ENCODE measurements at regions of chr10 and their contacts with region 1.

Region 1: GRCh38 chr10:101467286-101467770 is 113.4 kb downstream of the BTRC start:
- DNase-seq: peak; percentile 36
- H3K4me3 Mint-ChIP-seq: no peak overlapping the region
- H3K27ac Mint-ChIP-seq: no peak overlapping the region
- H3K4me1 Mint-ChIP-seq: peaks cover 5% of the 10 kb centered on the region
- H3K27me3 Mint-ChIP-seq: no peaks in the 10 kb centered on the region

Region 2: DNA sequence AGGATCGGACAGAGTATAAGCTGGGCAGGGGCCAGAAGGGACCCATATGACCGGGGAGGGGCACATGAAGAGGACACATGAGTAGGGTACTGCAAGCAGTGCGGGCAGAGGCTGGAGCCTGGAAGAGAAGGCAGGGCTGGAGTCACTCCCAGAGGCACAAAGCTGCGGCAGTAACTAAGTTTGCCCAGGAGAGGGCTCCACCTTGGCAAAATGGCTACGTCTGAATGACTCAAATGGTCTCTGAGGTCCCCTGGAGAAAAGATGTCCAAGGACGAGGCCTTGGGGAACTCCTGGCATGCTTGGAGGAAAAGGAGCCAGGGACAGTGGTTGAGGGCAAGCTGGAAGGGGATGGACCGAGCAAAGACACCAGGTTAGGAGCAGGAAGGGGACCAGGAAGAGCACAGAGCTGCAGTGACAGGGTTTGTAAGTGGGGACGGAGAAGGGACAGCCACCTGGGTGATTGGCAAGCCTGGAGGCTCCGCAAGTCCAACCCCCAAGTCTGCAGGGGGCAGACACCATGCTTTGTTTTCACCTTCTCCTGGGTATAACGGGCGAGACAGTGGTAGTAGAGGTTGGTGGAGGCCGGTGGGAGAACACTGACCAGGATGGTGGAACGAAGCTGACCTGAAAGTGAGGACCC is 195.0 kb before region 1 on chr10:
- CTCF ChIA-PET with region 1: interaction called, 10 read pairs
- intact Hi-C with region 1: no loop called
- DNase-seq: peak; percentile 73
- H3K4me3 Mint-ChIP-seq: no peak overlapping the region
- H3K27ac Mint-ChIP-seq: no peak overlapping the region
- H3K4me1 Mint-ChIP-seq: peaks cover 2% of the 10 kb centered on the region
- H3K27me3 Mint-ChIP-seq: peaks cover 20% of the 10 kb centered on the region

Region 3: DNA sequence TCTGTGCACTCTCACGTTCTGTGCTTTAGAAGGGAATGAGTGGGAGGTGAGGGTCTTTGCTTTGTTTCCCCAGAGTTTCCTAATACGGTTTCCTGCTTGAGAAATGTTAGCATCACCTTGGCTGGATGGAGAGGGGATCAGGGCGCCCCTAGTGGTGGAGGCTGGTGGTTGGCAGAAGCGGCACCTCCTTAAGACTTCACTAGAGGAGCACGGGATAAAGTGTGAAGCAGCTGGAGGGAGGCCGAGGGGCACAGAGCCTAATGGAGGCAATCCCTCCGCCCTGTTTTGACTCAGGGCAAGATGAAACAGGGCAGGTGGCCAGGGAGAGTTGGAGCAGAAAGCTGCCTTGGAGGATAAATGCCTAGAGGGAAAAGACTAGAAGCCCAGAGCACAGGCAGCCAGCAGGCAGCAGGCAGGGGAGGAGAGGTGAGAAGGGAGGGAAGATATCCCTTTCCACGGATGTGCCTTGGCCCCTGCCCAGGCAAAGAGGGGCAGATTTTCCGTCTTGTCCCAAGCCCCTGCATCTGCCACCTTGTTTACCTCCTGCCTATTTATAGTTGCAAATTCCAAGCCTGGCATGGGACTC is 169.3 kb before region 1 on chr10:
- CTCF ChIA-PET with region 1: interaction called, 13 read pairs
- intact Hi-C with region 1: loop called (anchors 2 kb)
- DNase-seq: peak; percentile 89
- H3K4me3 Mint-ChIP-seq: no peak overlapping the region
- H3K27ac Mint-ChIP-seq: no peak overlapping the region
- H3K4me1 Mint-ChIP-seq: peaks cover 1% of the 10 kb centered on the region
- H3K27me3 Mint-ChIP-seq: peaks cover 35% of the 10 kb centered on the region

Region 4: DNA sequence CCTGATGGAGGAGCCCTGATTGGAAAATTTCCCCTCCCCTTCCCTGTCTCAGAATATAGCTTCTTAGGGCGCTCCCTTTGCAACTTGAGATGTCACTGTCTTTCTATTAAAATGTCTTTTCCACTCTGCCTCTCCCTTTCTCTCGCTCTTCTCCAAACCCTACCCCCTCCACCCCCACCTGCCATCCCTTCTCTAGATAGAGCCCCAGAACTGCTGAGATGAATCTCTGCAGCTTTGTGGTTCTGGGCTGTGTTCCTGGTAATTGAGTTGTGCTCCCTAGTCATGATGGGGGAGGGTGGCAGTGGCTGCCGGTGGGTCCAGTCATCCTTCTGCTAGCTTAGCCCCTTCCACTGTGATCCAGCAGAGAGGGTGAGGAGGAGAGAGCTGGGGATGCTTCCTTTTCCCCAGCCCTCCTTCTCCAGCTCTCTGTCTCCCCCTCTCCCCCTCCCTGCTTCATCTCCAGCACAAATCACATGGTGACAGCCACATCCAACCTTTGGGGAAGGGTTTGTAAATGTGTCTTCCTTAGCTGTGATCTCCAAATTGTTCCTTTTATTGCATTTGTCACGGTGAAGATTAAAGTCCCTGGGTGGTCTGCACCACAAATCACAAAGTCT is 164.1 kb before region 1 on chr10:
- CTCF ChIA-PET with region 1: interaction called, 13 read pairs
- intact Hi-C with region 1: loop called (anchors 2 kb)
- DNase-seq: no peak
- H3K4me3 Mint-ChIP-seq: no peak overlapping the region
- H3K27ac Mint-ChIP-seq: no peak overlapping the region
- H3K4me1 Mint-ChIP-seq: no peaks in the 10 kb centered on the region
- H3K27me3 Mint-ChIP-seq: peaks cover 23% of the 10 kb centered on the region

Region 5: DNA sequence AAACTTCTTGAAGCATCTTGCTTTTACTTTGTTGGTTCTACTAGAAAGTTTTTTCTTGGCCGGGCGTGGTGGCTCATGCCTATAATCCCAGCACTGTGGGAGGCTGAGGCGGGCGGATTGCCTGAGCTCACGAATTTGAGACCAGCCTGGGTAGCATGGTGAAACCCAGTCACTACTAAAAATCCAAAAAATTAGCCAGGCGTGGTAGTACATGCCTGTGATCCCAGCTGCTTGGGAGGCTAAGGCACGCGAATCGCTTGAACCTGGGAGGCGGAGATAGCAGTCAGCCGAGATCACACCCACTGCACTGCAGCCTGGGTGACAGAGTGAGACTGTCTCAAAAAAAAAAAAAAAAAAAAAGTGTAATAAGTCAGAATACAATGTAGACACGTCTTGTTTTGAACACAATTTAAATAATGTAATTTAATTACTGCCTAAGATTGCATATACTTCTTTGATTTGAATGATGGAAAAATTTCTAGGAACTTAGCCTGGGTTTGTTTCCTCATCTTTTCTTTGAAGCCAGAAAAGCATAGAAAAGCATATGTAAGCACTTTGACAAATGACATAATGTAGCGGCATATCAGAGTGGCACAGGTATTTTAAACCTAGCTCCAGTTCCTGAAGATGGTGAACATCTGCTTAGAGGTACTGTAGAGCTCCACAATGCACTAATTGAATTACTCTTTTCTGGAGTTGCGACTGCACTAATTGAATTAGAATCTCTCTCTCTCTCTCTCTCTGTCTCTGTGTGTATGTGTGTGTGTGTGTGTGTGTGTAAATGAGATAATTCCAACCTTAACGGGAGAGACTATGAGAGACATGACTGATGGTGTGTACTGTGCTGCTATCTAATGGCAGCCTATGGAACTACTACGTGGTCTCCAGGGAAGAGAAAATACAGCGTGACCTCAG is 25.5 kb before region 1 on chr10:
- CTCF ChIA-PET with region 1: interaction called, 17 read pairs
- intact Hi-C with region 1: no loop called
- DNase-seq: peak; percentile 48
- H3K4me3 Mint-ChIP-seq: no peak overlapping the region
- H3K27ac Mint-ChIP-seq: no peak overlapping the region
- H3K4me1 Mint-ChIP-seq: peaks cover 2% of the 10 kb centered on the region
- H3K27me3 Mint-ChIP-seq: no peaks in the 10 kb centered on the region

Region 6: DNA sequence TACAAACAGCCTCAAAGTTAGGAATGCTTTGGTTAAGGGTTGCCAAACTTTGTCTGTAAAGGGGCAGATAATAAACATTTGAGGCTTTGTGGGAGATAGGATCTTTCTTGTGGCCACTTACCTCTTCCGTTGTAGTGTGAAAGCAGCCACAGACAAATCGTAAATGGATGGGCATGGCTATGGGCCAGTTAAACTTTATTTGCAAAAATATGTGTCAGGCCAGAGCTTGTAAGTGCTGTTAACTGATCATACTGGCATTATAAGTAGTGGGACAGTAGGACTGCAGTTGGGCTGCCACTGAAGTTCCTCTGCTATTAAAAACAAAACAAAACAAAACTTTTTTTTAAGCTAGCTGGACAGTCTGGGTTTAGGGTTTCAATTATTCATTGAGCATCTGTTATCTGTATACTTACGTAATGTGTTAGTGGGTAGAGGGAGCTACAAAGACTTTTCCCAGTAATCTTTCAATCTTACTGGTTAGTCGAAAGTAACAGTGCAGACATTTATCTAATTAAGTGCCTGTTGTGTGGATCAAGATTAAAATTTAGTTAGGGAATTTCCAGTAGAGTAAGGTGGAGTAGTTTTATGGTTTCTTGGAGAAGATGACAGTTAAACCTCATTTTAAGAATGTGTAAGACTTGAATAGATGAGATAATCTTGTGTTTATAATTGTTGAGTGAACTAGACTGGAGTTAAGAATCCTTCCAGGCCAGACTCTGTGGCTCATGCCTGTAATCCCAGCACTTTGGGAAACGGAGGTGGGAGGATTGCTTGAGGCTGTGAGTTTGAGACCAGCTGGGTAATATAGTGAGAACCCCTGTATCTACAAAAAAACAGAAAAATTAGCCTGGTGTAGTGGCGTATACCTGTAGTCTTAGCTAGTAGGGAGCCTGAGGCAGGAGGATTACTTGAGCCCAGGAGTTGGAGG is 13.3 kb before region 1 on chr10:
- CTCF ChIA-PET with region 1: interaction called, 17 read pairs
- intact Hi-C with region 1: no loop called
- DNase-seq: no peak
- H3K4me3 Mint-ChIP-seq: no peak overlapping the region
- H3K27ac Mint-ChIP-seq: no peak overlapping the region
- H3K4me1 Mint-ChIP-seq: peaks cover 22% of the 10 kb centered on the region
- H3K27me3 Mint-ChIP-seq: no peaks in the 10 kb centered on the region

Region 7: DNA sequence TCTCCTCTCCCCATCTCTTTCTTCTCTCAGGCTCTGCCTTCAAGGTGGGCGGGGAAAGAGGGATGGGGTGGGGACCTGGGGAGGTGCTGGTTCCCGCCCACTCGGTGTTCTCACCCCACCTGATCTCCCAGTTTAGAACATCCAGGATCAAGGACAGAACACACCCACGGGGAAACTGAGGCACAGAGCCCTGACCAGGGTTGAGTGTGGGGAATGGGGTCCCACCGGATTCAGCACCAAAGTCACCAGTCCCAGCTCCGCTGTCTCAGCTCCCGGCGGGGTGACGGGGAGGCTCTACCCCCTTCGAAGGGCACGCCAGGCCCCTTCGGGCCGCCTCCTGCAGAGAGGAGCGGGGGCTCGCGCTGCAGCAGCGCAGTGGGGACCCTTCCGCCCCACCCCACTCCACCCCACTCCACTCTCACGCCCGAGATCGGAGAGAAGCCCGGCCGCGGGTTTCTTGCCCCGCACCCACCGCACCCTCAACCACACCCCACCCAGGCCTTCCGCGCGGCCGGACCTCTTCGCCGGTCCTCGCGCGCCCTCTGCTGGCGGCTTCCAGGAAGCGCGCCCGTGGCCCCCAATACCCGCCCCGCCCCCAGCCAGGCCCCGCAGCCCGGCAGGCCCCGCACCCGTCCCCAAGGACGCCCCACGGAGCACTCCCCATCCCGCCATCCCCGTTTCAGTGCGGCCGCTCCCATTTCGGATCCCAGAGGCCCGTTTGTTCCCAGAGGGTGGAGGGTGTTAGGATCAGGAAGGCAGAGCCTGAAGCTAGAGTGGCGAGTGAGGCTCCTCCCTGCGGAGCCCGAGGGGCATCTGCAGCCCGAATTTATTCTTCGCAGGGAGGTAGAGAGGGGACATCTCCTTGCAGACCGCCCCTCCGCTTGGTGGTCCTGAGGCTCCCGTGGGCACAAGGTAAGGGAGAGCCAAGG is 102.8 kb after region 1 on chr10:
- CTCF ChIA-PET with region 1: interaction called, 5 read pairs
- intact Hi-C with region 1: loop called (anchors 1 kb)
- DNase-seq: peak; percentile 81
- H3K4me3 Mint-ChIP-seq: peak overlapping the region; percentile 62
- H3K27ac Mint-ChIP-seq: no peak overlapping the region
- H3K4me1 Mint-ChIP-seq: peaks cover 15% of the 10 kb centered on the region
- H3K27me3 Mint-ChIP-seq: peaks cover 42% of the 10 kb centered on the region